Aorta (tissue), 5 donors: ENCODE measurements at regions of chr14 and their contacts with region 1.

Region 1: GRCh38 chr14:81710234-81710845 is 176.7 kb upstream of the SEL1L start:
- DNase-seq: no peak
- ATAC-seq: no peak
- H3K4me3 ChIP-seq: no peak overlapping the region
- H3K27ac ChIP-seq: no peak overlapping the region
- H3K4me1 ChIP-seq: no peaks in the 10 kb centered on the region
- H3K27me3 ChIP-seq: no peaks in the 10 kb centered on the region

Region 2: GRCh38 chr14:81625343-81625742 is 85.0 kb before region 1 on chr14:
- intact Hi-C with region 1: loop called in 1 of 2 experiments (anchors 10 kb)
- DNase-seq: no peak
- ATAC-seq: no peak
- H3K4me3 ChIP-seq: no peak overlapping the region
- H3K27ac ChIP-seq: no peak overlapping the region
- H3K4me1 ChIP-seq: no peaks in the 10 kb centered on the region
- H3K27me3 ChIP-seq: no peaks in the 10 kb centered on the region

Region 3: GRCh38 chr14:81980601-81981306 is 270.4 kb after region 1 on chr14:
- intact Hi-C with region 1: loop called (anchors 10 kb)
- DNase-seq: no peak
- ATAC-seq: no peak
- H3K4me3 ChIP-seq: no peak overlapping the region
- H3K27ac ChIP-seq: no peak overlapping the region
- H3K4me1 ChIP-seq: no peaks in the 10 kb centered on the region
- H3K27me3 ChIP-seq: no peaks in the 10 kb centered on the region